ENCODE measurements at regions of chr4 and their contacts with region 1.

Region 1: GRCh38 chr4:150768497-150768896 is 186.5 kb downstream of the MAB21L2 start:
- DNase-seq: peak; percentile 17
- ATAC-seq: no peak
- H3K4me3 ChIP-seq: no peak overlapping the region
- H3K27ac ChIP-seq: no peak overlapping the region
- H3K4me1 ChIP-seq: 0 out of 2 replicates have a peak, but pooled peaks cover 2% of the 10 kb centered on the region
- H3K27me3 ChIP-seq: no peaks in the 10 kb centered on the region
- CTCF ChIP-seq: no peak
- POLR2A ChIP-seq: no peak
- RAD21 ChIP-seq: no peak

Region 2: GRCh38 chr4:150482581-150482980 is 285.9 kb before region 1 on chr4:
- CTCF ChIA-PET with region 1: no interaction called
- POLR2A ChIA-PET with region 1: no interaction called
- dilution Hi-C with region 1: no loop called
- in situ Hi-C with region 1: no loop called
- intact Hi-C with region 1: no loop called
- DNase-seq: no peak
- ATAC-seq: no peak
- H3K4me3 ChIP-seq: no peak overlapping the region
- H3K27ac ChIP-seq: no peak overlapping the region
- H3K4me1 ChIP-seq: no peaks in the 10 kb centered on the region
- H3K27me3 ChIP-seq: no peaks in the 10 kb centered on the region
- CTCF ChIP-seq: no peak
- POLR2A ChIP-seq: no peak
- RAD21 ChIP-seq: no peak

Region 3: DNA sequence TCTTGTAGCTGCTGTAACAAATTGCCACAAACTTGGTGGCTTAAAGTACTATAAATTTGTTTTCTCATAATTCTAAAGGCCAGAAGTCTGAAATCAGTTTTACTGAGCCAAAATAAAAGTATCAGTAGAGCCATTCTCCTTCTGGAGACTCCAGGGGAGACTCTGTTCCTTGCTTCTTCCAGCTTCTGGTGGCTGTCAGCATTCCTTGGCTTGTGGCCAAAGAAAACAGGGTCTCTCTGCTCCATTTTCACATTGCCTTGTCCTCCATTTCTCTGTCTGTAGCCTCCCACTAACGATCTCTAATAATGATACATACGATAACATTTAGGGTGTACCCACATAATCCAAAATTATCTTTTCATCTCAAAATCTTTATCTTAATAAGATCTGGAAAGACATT is 13.8 kb after region 1 on chr4:
- CTCF ChIA-PET with region 1: no interaction called
- POLR2A ChIA-PET with region 1: no interaction called
- dilution Hi-C with region 1: no loop called
- in situ Hi-C with region 1: no loop called
- intact Hi-C with region 1: loop called (anchors 2 kb)
- DNase-seq: peak; percentile 7
- ATAC-seq: no peak
- H3K4me3 ChIP-seq: no peak overlapping the region
- H3K27ac ChIP-seq: no peak overlapping the region
- H3K4me1 ChIP-seq: no peaks in the 10 kb centered on the region
- H3K27me3 ChIP-seq: no peaks in the 10 kb centered on the region
- CTCF ChIP-seq: no peak
- POLR2A ChIP-seq: no peak
- RAD21 ChIP-seq: no peak

Measured in IMR-90 (cell line).